AG04450 (cell line): ENCODE measurements at regions of chr9 and their contacts with region 1.

Region 1: DNA sequence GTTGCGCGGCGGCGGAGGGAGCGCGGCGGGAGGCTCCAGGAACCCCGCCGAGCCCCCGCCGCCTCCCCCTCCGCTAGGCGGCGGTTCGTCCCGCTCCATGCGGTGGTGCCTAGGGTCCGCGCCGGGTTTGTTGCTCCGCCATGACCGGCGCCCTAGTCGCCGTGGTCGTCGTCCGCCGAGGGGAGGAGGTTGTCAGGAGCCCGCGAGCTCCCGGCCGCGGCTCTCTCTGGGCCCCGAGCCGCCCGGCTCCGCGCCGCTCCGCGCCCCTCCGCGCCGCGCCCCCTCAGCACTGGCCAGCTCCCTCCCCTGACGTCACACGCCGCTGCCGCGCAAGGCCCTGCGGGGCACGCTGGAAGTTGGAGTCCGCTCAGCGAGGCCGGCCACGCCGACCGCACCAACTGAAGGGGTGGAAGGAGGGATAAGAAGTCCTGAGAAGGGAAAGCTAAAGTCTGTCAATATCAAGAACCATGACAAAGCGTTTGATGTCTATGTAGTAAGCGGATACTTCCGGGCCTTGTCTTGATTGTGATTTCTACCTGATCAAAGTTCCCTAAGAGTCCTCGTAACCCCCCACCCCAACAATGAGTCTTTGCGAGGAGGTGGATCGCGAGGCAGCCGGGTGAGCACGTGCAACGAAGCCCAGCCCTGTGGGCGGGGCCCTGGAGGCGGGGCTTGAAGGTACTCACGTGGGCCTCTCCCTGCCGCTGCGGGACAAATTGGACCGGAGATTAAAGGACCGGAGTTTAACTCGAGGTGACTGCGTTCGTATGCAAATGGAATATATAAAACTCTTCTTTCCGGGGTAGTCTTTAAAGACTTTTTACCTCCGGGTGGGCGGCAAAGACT is at the start of gene NR6A1:
- DNase-seq: peak; percentile 89
- H3K4me3 ChIP-seq: peak within 1 kb of the TSS; percentile 63
- H3K27ac ChIP-seq: peak within 1 kb of the TSS; percentile 68
- H3K27me3 ChIP-seq: peaks cover 38% of the 10 kb centered on the region
- CTCF ChIP-seq: peak; percentile 2; the same call in 1 of the 2 replicates
- polyA plus RNA-seq, gene NR6A1: 0.10 and 0.12 TPM in 2 replicates

Region 2: DNA sequence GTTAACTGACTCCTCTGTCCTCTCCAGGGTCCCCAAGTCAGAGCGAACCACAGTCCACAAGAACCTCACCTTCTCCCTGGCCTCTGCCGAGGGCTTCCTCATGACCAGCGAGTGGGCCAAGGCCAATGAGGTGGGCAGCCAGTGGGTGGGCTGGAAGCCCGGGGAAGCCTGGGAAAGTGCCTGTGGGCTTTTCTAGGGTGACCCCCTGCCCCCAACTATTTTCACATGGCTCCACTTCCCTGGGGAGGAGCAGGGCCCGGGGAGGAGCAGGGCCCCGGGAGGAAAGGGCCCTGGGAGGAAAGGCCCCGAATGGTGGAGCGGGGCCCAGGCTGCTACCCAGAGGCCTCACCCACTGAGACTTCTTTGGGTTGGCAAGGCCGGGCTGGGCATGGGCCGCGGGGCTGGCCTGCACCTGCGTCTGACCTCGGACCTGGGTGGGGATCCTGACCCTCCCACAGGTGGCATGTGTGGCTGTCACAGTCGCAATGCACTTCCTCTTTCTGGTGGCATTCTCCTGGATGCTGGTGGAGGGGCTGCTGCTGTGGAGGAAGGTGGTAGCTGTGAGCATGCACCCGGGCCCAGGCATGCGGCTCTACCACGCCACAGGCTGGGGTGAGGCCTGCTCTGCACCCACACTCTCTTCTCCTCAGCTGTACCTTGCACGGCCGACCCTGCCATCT is 303.0 kb before region 1 on chr9:
- CTCF ChIA-PET with region 1: no interaction called
- POLR2A ChIA-PET with region 1: no interaction called
- DNase-seq: no peak
- H3K4me3 ChIP-seq: no peak overlapping the region
- H3K27ac ChIP-seq: no peak overlapping the region
- H3K27me3 ChIP-seq: peaks cover 31% of the 10 kb centered on the region
- CTCF ChIP-seq: no peak

Region 3: DNA sequence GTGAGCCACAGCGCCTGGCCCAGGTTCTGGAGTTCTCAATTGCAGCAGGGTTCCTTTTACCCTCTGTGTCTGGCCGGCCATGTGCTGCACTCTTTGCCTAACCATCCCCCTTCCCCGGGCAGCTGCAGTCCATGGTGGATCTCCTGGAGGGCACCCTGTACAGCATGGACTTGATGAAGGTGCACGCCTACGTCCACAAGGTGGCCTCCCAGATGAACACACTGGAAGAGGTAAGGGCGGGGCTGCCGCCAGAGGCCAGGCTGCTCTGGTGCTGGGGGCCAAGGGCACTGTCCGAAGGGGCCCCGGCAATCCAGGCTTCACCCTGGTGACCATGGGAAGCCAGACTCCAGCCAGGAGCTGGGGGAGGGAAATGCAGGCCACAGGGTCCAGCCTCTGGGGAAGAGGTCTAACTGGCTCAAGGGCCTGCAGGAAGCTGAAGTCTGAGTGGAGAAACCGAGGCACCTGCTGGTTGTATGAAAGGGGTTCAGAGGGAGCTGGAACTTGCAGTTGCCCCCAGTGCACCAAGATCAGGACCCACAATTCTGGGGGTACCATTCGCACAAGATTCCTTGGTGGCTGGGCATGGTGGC is 23.8 kb after region 1 on chr9:
- CTCF ChIA-PET with region 1: interaction called, 12 read pairs
- POLR2A ChIA-PET with region 1: no interaction called
- DNase-seq: no peak
- H3K4me3 ChIP-seq: no peak overlapping the region
- H3K27ac ChIP-seq: no peak overlapping the region
- H3K27me3 ChIP-seq: no peaks in the 10 kb centered on the region
- CTCF ChIP-seq: no peak

Region 4: GRCh38 chr9:124812401-124813016 is 41.3 kb after region 1 on chr9:
- CTCF ChIA-PET with region 1: interaction called, 14 read pairs
- POLR2A ChIA-PET with region 1: interaction called, 3 read pairs
- DNase-seq: peak; percentile 95
- H3K4me3 ChIP-seq: no peak overlapping the region
- H3K27ac ChIP-seq: peak overlapping the region; percentile 98
- H3K27me3 ChIP-seq: no peaks in the 10 kb centered on the region
- CTCF ChIP-seq: peak; percentile 18; the same call in 1 of the 2 replicates

Region 5: GRCh38 chr9:124839612-124840299 is 68.5 kb after region 1 on chr9:
- CTCF ChIA-PET with region 1: interaction called, 674 read pairs
- POLR2A ChIA-PET with region 1: interaction called, 5 read pairs
- DNase-seq: no peak
- H3K4me3 ChIP-seq: no peak overlapping the region
- H3K27ac ChIP-seq: no peak overlapping the region
- H3K27me3 ChIP-seq: no peaks in the 10 kb centered on the region
- CTCF ChIP-seq: peak; percentile 67

Region 6: DNA sequence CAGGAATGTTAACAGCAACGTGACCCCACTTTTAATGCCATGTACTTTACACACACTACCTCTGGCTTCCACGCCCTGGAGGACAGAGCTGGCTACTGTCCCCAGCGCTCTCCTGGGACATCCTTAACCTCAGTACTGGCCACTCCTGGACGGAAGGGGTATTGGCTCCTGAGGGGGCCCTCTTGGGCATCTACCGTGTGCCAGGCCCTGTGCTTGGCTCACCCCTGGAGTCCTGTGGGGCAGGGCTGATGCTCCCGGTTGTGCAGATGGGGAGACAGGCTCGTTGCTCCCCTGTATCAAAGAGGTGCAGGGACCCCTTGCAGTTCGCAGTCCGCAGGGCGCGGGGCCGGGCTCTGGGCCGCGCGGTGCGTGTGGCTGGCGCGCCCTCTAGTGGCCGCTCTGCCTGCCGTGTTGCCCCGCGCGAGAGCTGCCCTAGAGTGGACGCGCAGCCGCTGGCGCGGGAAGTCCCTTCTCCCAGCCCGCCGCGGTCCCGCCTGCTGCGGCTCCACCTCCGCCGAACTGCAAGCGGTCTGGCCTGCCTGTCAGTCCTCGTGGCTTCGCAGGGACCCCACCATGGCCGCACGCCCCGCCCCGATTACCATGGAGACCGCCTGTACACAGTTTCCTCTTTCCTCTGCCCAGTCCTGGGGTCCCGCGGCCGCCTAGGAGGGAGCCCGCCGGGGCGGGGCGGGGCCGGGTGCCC is 81.7 kb after region 1 on chr9 and contains the start of gene WDR38:
- CTCF ChIA-PET with region 1: interaction called, 674 read pairs
- POLR2A ChIA-PET with region 1: interaction called, 12 read pairs
- DNase-seq: no peak
- H3K4me3 ChIP-seq: peak within 1 kb of the TSS; percentile 61
- H3K27ac ChIP-seq: no peak within 1 kb of the TSS
- H3K27me3 ChIP-seq: peaks cover 3% of the 10 kb centered on the region
- CTCF ChIP-seq: peak; percentile 82
- polyA plus RNA-seq, gene WDR38: not detected in 2 replicates

Region 7: DNA sequence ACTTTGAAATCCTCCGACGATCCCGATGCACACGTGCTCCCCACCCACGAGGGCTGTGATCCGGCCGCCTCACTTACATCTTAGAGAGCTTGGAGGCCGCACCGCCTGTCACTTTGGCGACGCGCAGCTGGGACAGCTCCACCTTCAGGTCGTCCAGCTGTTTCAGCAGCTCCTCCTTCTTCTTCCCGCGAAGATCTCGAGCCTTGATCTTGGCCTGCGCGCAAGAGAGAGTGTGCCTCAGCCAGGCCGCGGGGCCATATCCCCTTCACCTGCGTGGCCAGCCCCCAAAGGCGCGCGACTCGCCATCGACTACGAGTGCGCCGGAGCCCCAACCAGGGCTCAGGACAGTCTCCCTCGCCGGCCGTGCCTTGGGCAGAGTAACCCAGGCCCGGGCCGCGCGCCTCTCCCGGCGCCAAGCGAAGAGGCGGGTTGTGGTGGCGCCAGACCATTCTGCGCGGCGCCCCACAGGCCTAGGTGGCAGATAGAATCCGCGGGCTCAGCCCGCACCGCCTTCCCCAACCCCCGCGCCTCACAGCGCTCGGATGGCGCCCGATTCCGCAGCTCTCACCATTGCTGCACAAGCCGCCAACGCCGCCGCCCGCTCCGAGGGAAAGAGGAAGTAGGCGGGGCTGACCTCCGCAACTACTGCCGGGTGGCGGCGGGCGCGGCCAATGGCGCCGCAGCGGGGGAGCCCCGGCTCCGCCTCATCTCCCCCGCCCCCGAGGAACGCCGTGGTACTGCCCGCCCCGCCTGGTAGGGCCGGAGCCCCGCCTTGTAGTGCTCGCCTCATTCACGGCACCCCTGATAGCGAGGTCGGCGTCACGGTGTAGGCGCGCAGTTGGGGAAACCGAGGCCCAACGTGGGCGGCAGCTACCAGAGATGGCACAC is 90.3 kb after region 1 on chr9 and contains the starts of genes ARPC5L and RPL35:
- CTCF ChIA-PET with region 1: interaction called, 674 read pairs
- POLR2A ChIA-PET with region 1: interaction called, 9 read pairs
- DNase-seq: peak; percentile 72
- H3K4me3 ChIP-seq: peak within 1 kb of the TSS; percentile 95
- H3K27ac ChIP-seq: peak within 1 kb of the TSS; percentile 81
- H3K27me3 ChIP-seq: no peaks in the 10 kb centered on the region
- CTCF ChIP-seq: peak; percentile 19
- polyA plus RNA-seq, gene ARPC5L: 45.8 and 62.0 TPM in 2 replicates
- polyA plus RNA-seq, gene RPL35: 1,392 and 2,283 TPM in 2 replicates

Region 8: DNA sequence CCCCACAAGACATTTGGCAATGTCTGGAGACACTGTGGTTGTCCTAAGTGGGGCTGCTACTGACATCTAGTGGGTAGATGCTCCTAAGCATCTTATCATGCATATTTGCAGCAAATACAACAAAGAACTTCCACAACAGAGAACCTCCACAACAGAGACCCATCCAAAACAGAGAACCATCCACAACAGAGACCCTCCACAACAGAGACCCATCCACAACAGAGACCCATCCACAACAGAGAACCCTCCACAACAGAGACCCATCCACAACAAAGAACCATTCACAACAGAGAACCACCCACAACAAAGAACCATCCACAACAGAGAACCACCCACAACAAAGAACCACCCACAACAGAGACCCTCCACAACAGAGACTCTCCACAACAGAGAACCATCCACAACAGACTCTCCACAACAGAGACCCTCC is 123.5 kb after region 1 on chr9:
- CTCF ChIA-PET with region 1: interaction called, 38 read pairs
- POLR2A ChIA-PET with region 1: no interaction called
- DNase-seq: no peak
- H3K4me3 ChIP-seq: no peak overlapping the region
- H3K27ac ChIP-seq: no peak overlapping the region
- H3K27me3 ChIP-seq: no peaks in the 10 kb centered on the region
- CTCF ChIP-seq: peak; percentile 70